ENCODE measurements at regions of chr3 and their contacts with region 1.

Region 1: DNA sequence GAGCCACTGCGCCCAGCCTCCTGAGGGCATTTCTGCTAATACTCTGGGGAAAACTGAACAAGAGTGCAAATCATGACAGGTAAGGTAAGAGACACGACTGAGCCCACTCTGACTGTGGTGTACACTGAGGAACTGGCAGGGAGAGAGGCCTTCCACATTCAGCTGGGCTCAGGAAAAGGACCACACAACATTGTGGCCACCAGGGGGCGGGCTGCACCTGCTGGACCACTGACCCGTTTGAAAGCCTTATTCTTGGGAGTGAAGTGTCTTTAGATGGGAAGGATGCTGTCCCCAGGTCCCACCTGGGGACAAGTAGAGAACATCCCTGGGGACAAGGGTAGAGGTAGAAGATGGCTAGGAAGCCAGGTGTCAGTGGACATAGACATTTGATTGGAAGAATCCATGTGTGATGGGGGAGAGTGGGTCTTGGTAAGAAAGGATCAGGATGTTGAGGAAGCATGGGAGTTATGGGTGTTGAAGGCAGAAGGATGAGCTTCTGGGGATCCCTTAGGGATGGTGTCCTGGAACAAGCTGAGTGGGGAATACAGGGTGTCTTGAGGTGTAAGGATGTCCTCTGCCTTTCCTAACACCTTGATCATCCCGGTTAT is 6.2 kb upstream of the CTDSPL start:
- DNase-seq: peak; percentile 94
- H3K4me3 ChIP-seq: no peak overlapping the region
- H3K27ac ChIP-seq: no peak overlapping the region
- H3K4me1 ChIP-seq: peaks cover 14% of the 10 kb centered on the region
- H3K27me3 ChIP-seq: no peaks in the 10 kb centered on the region
- CTCF ChIP-seq: peak; percentile 94 to 96 (median 95)
- POLR2A ChIP-seq: no peak

Region 2: GRCh38 chr3:37703626-37704025 is 151.8 kb before region 1 on chr3:
- intact Hi-C with region 1: no loop called
- DNase-seq: no peak
- H3K4me3 ChIP-seq: no peak overlapping the region
- H3K27ac ChIP-seq: no peak overlapping the region
- H3K4me1 ChIP-seq: peaks cover 26% of the 10 kb centered on the region
- H3K27me3 ChIP-seq: no peaks in the 10 kb centered on the region
- CTCF ChIP-seq: no peak
- POLR2A ChIP-seq: no peak

Region 3: DNA sequence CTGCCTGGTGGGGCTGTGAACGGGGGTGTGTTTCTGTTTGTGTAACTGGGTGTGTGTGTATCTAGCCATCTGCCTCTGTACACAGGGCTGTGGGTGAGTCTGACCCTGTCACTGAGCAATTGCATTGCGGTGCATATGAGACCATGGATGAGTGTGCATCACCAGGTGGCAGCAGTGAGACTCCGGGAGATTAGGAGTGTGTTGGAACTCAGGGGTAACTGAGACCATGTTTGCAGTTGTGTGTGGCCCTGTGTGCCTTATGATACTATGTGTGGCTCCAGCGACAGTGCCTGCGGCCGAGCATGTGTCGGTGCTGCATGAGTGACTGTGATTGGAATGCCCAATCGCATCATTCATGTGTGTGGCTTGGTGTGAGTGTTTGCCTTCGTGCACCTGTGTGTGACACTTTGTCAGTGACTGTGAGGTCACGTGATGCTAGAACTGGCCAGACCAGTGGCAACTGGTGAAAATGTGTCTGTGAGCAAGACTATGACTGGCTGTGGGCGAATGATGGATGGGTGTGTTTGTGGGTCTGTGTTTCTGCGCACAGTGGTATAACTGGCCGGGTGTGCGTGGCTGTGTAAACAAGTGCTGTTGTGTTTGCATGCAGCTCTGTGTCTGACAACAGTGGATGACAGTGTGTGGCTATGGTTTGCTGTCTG is 149.1 kb after region 1 on chr3:
- intact Hi-C with region 1: loop called (anchors 10 kb)
- DNase-seq: peak; percentile 87
- H3K4me3 ChIP-seq: no peak overlapping the region
- H3K27ac ChIP-seq: peak overlapping the region; percentile 59 to 78
- H3K4me1 ChIP-seq: peaks cover 37% of the 10 kb centered on the region
- H3K27me3 ChIP-seq: no peaks in the 10 kb centered on the region
- CTCF ChIP-seq: peak; percentile 42 to 48 (median 42)
- POLR2A ChIP-seq: no peak